ENCODE measurements at regions of chr12 and their contacts with region 1.

Region 1: GRCh38 chr12:91355150-91356006 is 172.8 kb upstream of the DCN start:
- DNase-seq: peak; percentile 69
- H3K4me3 ChIP-seq: no peak overlapping the region
- H3K27ac ChIP-seq: no peak overlapping the region
- H3K4me1 ChIP-seq: no peaks in the 10 kb centered on the region
- H3K27me3 ChIP-seq: no peaks in the 10 kb centered on the region
- CTCF ChIP-seq: peak; percentile 68

Region 2: DNA sequence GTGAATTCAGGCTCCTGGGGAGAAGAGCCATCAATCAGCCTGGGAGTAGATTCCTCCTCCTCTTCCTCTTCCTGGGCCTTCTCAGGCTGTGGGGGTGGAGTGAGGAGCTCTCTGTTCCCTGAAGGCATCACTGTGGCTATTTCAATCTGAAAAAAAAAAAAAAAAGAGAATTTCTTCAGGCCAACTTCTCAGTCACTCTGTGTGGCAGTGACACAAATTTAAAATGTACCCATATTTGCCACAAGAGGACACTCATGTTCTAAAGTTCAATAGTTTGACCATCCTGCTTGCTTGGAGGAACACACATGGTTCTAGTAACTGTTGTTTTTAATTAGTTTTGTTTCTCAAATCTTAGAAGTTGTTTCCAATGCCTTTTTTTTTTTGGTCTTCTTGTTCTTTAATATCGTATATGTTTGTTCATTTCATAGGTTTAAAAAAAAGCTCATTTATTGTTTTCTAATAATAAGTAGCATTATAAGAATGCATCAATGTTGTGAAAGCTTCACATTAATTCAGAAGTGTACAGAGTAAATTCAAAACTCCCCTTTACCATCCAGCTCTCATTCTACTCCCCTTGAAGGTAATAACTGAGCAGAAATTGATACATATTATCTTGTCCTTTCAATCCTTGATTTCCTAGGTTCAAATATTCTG is 377.1 kb before region 1 on chr12:
- intact Hi-C with region 1: loop called (anchors 2 kb)
- DNase-seq: no peak
- H3K4me3 ChIP-seq: no peak overlapping the region
- H3K27ac ChIP-seq: no peak overlapping the region
- H3K4me1 ChIP-seq: no peaks in the 10 kb centered on the region
- H3K27me3 ChIP-seq: no peaks in the 10 kb centered on the region
- CTCF ChIP-seq: peak; percentile 41

Region 3: GRCh38 chr12:91493308-91493707 is 137.9 kb after region 1 on chr12:
- intact Hi-C with region 1: no loop called
- DNase-seq: no peak
- H3K4me3 ChIP-seq: no peak overlapping the region
- H3K27ac ChIP-seq: peak overlapping the region; percentile 60
- H3K4me1 ChIP-seq: no peaks in the 10 kb centered on the region
- H3K27me3 ChIP-seq: no peaks in the 10 kb centered on the region
- CTCF ChIP-seq: no peak

Measured in colonic mucosa (tissue), 4 donors.